AG04449 (cell line): ENCODE measurements at regions of chr5 and their contacts with region 1.

Region 1: DNA sequence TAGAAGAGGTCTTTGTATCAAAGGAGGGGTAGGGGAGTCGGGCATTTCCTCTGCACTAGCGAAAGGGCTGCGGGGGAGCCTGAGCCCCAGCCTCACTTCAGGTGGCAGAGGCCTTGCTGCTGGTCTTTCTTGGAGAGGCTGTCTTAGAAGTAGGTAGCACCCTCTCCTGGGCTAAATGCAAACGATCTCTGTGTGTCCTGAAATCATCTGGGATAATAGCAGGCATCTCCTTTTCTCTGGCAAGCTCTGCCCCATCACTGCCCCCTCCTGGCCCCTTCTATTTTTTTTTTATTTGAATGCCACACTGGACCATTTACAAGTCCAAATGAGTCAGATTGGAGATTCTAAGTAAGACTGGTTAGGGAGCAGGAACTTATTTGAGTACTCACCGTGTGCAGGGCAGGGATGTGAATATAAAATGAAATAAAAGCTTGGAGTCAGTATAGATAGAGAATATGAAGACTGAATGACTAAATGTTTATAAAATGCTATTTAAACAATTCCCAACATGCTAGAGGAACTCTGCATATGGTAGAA is 137.1 kb downstream of the FGF1 start:
- DNase-seq: peak; percentile 80
- H3K4me3 ChIP-seq: no peak overlapping the region
- CTCF ChIP-seq: peak; percentile 74

Region 2: GRCh38 chr5:142145106-142145900 is 403.5 kb before region 1 on chr5:
- CTCF ChIA-PET with region 1: interaction called, 99 read pairs
- POLR2A ChIA-PET with region 1: no interaction called
- DNase-seq: no peak
- H3K4me3 ChIP-seq: no peak overlapping the region
- CTCF ChIP-seq: peak; percentile 72

Region 3: GRCh38 chr5:142156839-142157463 is 391.9 kb before region 1 on chr5:
- CTCF ChIA-PET with region 1: interaction called, 141 read pairs
- POLR2A ChIA-PET with region 1: no interaction called
- DNase-seq: no peak
- H3K4me3 ChIP-seq: no peak overlapping the region
- CTCF ChIP-seq: no peak

Region 4: GRCh38 chr5:142316051-142316450 is 232.8 kb before region 1 on chr5:
- CTCF ChIA-PET with region 1: interaction called, 193 read pairs
- POLR2A ChIA-PET with region 1: no interaction called
- DNase-seq: no peak
- H3K4me3 ChIP-seq: no peak overlapping the region
- CTCF ChIP-seq: no peak

Region 5: DNA sequence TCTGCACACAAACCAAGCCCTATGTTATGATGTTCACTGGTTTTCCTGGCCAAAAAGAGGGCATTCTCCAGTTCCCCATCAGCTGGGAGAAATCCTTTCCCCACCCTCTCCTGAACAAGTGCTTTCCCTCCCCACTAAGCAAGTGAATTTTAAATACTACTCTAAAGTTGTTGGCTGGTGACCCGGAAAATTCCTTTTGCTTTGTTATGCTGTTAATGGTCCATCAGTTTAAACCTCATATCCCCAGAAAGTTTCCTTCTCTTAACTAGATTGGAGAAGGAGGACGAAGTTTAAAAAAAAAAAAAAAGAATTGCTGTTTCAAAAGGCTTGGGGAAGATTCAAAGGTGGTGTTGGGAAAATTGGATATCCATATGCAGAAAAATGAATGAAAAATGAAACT is 202.1 kb before region 1 on chr5:
- CTCF ChIA-PET with region 1: interaction called, 13 read pairs
- POLR2A ChIA-PET with region 1: no interaction called
- DNase-seq: no peak
- H3K4me3 ChIP-seq: no peak overlapping the region
- CTCF ChIP-seq: no peak

Region 6: DNA sequence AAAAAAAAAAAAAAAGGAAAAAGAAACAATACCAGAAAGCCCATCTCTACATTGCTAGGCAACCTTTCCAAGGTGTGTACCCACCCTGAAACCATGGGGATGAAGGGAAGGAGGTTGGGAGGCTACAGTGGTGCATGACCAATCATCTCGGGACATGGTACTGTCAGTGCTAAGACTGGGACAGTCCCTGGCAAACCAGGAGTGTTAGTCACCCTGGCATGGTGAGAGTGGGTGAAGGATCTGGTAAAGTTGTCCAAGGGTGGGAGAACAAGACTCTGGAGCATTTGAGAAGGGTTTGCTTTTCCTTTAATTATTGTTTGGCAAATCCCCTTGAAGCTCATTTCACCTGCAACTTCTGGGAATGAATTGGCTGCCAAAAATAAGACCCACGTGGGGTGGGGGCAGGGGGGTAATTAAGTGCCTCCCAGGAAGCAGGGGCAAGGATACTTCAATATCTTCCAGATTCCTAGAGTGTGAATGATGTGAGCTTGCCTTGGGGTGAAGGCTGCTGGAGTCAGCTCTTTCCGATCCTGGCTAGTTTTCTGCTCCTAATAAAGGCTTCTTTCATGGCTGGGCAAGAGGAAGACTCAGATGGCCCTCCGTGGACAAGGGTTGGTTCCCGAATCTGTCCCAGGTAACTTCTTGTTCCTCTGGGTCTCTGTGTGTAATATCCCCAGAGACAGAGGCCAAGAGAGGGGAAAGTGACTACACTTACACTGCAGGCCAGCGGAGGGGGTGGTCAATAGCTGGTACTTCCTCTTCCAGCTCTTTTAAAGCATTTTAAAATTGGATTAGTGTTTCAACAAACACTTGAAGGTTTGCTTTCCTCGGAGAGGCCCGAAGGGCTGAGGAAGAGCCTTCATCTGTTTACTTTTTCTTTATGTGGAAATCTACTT is 162.4 kb before region 1 on chr5:
- CTCF ChIA-PET with region 1: interaction called, 10 read pairs
- POLR2A ChIA-PET with region 1: no interaction called
- DNase-seq: no peak
- H3K4me3 ChIP-seq: no peak overlapping the region
- CTCF ChIP-seq: no peak

Region 7: DNA sequence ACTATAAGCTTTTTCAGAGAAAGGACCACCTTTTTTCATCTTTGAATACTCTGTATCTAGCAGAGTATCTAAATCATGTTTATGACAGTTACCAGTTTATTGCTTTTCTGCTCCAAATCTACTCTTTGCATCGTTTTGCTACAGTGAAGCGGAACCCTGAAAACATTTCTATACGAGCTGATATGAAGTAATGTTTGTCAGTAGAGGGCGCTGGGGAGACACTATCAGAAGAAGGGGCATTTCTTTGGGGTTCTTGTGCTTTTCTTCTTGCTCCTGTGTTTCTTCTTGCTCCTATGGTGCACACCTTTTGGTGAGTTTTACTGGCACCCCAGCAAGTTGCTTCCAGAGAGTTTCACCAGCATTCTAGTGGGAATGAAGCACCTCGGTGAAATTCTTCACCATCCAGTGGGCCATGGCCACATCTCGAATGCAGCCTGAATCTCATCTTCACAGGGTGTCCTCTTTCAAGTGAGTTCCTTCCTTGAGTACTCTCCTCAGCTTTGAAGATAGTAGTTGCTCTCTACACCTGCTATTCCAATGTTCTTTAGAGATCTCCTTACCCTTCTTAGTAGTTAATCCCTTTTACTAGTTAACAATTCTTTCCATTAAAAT is 38.7 kb after region 1 on chr5:
- CTCF ChIA-PET with region 1: interaction called, 10 read pairs
- POLR2A ChIA-PET with region 1: no interaction called
- DNase-seq: no peak
- H3K4me3 ChIP-seq: no peak overlapping the region
- CTCF ChIP-seq: peak; percentile 51

Region 8: GRCh38 chr5:142644127-142644526 is 95.3 kb after region 1 on chr5:
- CTCF ChIA-PET with region 1: no interaction called
- POLR2A ChIA-PET with region 1: no interaction called
- DNase-seq: no peak
- H3K4me3 ChIP-seq: no peak overlapping the region
- CTCF ChIP-seq: no peak